Left cardiac atrium (tissue), 4 donors: ENCODE measurements at regions of chr9 and their contacts with region 1.

Region 1: GRCh38 chr9:132350861-132351315 is 3.9 kb downstream of the SETX start:
- DNase-seq: no peak
- ATAC-seq: no peak

Region 2: GRCh38 chr9:132079391-132080091 is 271.3 kb before region 1 on chr9 and contains the start of gene MED27:
- intact Hi-C with region 1: no loop called
- DNase-seq: peak; percentile 96
- ATAC-seq: peak; percentile 97 to 99
- total RNA-seq, gene MED27: 15.0 to 21.2 TPM

Region 3: GRCh38 chr9:132401824-132402223 is 50.9 kb after region 1 on chr9:
- intact Hi-C with region 1: loop called in 1 of 2 experiments (anchors 2 kb)
- DNase-seq: no peak
- ATAC-seq: no peak